Caco-2 (cell line): ENCODE measurements at regions of chr4 and their contacts with region 1.

Region 1: DNA sequence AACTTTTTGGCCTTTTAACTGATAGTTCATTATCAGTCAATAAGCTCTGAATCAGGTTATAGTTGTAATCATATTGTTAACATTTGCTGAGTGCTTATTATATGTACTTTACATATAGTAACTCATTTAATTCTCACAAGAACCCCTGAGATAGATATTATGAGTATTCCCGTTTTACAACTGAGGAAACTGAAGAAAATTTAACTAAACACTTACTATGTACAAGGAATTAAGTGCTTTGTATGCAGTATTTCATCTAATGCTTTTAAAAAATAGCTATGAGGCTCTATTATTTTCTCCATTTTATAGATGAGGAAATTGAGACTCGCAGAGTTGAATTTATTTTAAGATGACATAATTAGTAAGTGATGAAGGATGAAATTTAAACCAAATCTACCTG is 27.7 kb upstream of the FGF2 start:
- DNase-seq: no peak
- H3K4me3 ChIP-seq: no peak overlapping the region
- H3K4me3 Mint-ChIP-seq: no peak overlapping the region
- H3K27ac Mint-ChIP-seq: no peak overlapping the region
- H3K4me1 ChIP-seq: no peaks in the 10 kb centered on the region
- H3K4me1 Mint-ChIP-seq: no peaks in the 10 kb centered on the region
- H3K27me3 ChIP-seq: no peaks in the 10 kb centered on the region
- H3K27me3 Mint-ChIP-seq: no peaks in the 10 kb centered on the region
- CTCF ChIP-seq: no peak

Region 2: DNA sequence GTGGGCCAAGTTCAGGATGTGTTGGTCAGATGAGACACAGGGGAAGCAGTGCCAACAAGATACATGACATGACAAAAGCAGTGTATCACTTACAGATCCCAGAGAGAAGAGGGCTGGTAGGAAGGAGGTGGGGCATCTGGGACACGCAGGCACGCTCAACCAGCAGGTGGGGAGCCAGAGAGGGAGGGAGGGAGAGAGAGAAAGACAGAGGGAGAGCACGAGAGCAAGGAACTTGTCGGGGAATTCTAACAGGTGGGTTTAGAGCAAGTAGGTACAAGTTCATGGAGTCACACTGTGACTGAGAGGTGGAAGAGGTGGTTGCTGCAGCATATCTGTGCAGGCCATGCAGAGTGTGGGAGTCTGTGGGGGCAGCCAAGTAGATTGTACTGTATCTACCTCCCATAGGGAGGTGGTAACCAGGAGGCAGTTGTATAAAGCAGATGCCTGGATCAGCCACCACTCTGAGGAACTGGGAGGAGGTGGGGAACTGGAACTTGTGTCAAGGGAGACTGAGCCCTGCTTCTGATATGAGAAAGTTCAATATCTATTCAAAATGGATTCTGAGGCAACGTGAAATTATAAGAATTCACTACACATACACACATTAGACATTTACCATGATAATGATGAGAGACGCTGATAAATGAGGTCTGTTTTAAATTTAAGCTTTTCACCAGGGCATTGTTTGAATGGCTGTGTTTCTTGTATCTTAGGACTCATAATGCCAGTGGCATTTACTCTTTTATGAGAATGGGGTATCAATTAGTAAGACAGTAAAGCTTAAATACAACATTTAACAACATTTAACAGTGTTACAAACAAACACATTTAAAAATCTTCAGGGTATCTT is 22.7 kb before region 1 on chr4:
- CTCF ChIA-PET with region 1: no interaction called
- POLR2A ChIA-PET with region 1: no interaction called
- intact Hi-C with region 1: loop called (anchors 1 kb)
- DNase-seq: no peak
- H3K4me3 ChIP-seq: no peak overlapping the region
- H3K4me3 Mint-ChIP-seq: no peak overlapping the region
- H3K27ac Mint-ChIP-seq: no peak overlapping the region
- H3K4me1 ChIP-seq: no peaks in the 10 kb centered on the region
- H3K4me1 Mint-ChIP-seq: no peaks in the 10 kb centered on the region
- H3K27me3 ChIP-seq: no peaks in the 10 kb centered on the region
- H3K27me3 Mint-ChIP-seq: no peaks in the 10 kb centered on the region
- CTCF ChIP-seq: no peak

Region 3: DNA sequence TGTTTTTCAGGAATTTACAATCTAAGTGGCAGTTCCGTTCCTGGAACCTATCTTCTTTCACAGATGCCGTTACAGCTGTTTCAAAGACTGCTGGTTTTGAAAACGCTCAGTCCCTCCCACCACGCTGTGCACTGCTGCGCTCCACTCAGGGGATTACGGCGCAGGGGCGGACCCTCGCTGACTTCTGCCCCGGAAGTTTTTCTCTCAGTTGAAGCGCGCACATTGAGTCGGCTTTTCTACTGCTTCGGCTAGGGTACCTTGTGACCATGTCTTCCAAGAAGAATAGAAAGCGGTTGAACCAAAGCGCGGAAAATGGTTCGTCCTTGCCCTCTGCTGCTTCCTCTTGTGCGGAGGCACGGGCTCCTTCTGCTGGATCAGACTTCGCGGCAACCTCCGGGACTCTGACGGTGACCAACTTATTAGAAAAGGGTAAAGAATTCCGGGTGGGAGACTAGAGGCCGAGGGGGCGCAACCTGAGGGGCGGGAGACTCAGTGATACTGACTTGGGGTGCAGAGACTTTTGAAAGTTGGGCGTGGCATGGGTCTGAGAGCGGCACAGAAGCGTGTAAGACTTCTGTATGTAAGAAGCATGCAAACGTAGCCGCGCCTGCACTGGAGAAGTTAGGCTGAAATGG is 124.1 kb after region 1 on chr4:
- CTCF ChIA-PET with region 1: no interaction called
- POLR2A ChIA-PET with region 1: no interaction called
- intact Hi-C with region 1: no loop called
- DNase-seq: peak; percentile 80 to 81
- H3K4me3 ChIP-seq: peak overlapping the region; percentile 66
- H3K4me3 Mint-ChIP-seq: no peak overlapping the region
- H3K27ac Mint-ChIP-seq: peak overlapping the region; percentile 79
- H3K4me1 ChIP-seq: no peaks in the 10 kb centered on the region
- H3K4me1 Mint-ChIP-seq: no peaks in the 10 kb centered on the region
- H3K27me3 ChIP-seq: no peaks in the 10 kb centered on the region
- H3K27me3 Mint-ChIP-seq: no peaks in the 10 kb centered on the region
- CTCF ChIP-seq: no peak